ENCODE measurements at regions of chr11 and their contacts with region 1.

Region 1: DNA sequence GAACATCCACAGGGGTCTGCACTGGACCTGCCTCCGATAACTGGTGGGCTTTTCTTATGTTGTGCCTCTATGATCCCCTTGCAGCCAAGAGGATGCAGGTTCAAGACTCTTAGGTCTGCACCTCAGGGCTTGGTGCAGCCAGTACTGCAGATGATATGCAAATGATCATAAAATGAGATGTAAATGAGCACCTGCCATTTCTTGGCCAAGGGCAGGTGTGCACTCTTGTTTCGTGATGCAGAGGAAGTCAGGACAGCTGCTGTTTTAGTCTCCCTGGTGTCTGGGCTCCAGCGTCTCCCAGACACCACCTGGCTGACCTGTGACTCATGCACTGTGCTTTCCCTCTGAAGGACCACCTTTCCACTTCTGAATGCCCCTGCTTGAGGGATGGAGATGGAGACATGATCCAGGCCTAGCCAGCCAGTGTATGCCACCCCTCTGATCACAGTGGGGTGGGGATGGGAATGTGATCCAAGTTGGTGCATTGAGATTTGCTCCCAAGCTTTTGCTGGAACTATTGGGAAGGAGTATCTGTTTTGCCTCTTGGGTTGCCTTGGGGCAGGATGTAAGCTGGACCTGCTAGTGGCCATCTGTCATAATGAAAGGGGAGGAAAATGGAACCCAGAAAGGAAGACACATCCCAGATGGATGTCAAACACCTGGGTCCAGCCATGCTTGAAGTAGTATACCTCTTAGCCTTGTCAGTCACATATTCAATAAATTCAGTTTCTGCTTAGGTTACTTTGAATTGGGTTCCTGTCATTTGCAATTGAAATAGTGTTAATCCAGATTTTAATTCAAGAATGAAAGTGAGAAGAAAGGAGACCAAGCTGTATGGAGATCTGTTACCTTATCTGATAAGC is 3.3 kb upstream of the KCNJ11 start:
- DNase-seq: no peak
- ATAC-seq: no peak
- H3K4me3 ChIP-seq: no peak overlapping the region
- H3K27ac ChIP-seq: no peak overlapping the region
- H3K4me1 ChIP-seq: peaks cover 0 to 16% (median 5%) of the 10 kb centered on the region in 9 donors
- H3K27me3 ChIP-seq: peaks cover 0 to 27% (median 12%) of the 10 kb centered on the region in 7 donors
- CTCF ChIP-seq: no peak

Region 2: DNA sequence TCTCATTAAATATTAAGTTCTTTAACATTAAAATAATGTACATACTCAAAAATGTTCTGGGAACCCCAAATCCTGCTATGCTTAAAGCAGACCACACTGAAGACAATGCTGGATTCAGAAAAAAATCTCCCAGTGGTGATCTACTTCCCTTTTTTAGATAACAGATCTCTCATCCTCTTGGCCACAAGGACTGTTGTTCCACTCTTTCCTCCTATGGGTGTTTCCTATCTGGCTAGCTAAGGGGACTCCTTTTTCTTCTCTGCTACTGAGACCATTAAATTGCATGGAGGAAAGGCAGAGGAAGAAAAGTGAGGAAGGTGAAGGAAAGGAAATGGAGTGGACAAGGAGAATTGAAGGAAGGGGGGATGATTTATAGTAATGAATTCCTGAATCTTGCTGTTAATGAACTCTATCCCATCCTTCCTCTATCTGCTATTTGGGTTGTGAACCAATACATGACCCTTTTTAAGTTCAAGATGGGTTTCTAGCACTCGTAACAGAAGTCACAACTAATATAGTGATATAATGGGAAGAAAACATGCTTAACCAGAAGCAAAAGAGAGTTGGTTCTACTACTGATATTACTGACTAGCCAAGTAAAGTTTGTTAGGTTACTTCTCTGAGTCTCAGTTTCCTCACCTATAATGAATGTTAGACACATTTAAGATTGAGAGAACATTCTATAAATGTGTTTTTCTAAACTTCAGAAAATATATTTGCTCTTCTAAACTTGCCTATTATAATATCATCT is 237.1 kb before region 1 on chr11:
- intact Hi-C with region 1: no loop called
- DNase-seq: no peak
- ATAC-seq: peak in 4 of 8 donors; percentile 18 to 40 (median 28)
- H3K4me3 ChIP-seq: no peak overlapping the region
- H3K27ac ChIP-seq: peak overlapping the region in 8 of 10 donors; percentile 11 to 56 (median 34)
- H3K4me1 ChIP-seq: peaks cover 5 to 91% (median 55%) of the 10 kb centered on the region in 9 donors
- H3K27me3 ChIP-seq: no peaks in the 10 kb centered on the region
- CTCF ChIP-seq: no peak

Region 3: GRCh38 chr11:17479284-17480214 is 87.8 kb after region 1 on chr11:
- intact Hi-C with region 1: loop called in 1 of 10 experiments (anchors 2 kb)
- DNase-seq: peak in 1 of 2 donors; percentile 43
- ATAC-seq: peak in 7 of 8 donors; percentile 44 to 82 (median 64)
- H3K4me3 ChIP-seq: peak overlapping the region in 3 of 10 donors; percentile 16 to 26 (median 26)
- H3K27ac ChIP-seq: no peak overlapping the region
- H3K4me1 ChIP-seq: peaks cover 0 to 12% (median 0%) of the 10 kb centered on the region in 9 donors
- H3K27me3 ChIP-seq: peaks cover 0 to 53% (median 36%) of the 10 kb centered on the region in 7 donors
- CTCF ChIP-seq: no peak